Caco-2 (cell line): ENCODE measurements at regions of chr6 and their contacts with region 1.

Region 1: GRCh38 chr6:136643850-136644596 is 93.8 kb upstream of the MAP7 start:
- DNase-seq: peak; percentile 83 to 87
- H3K4me3 ChIP-seq: no peak overlapping the region
- H3K4me3 Mint-ChIP-seq: no peak overlapping the region
- H3K27ac Mint-ChIP-seq: no peak overlapping the region
- H3K4me1 ChIP-seq: peaks cover 5% of the 10 kb centered on the region; the same call in 1 of the 2 replicates
- H3K4me1 Mint-ChIP-seq: no peaks in the 10 kb centered on the region
- H3K27me3 ChIP-seq: no peaks in the 10 kb centered on the region
- H3K27me3 Mint-ChIP-seq: no peaks in the 10 kb centered on the region
- CTCF ChIP-seq: peak; percentile 85 to 93

Region 2: GRCh38 chr6:136822376-136823127 is 178.5 kb after region 1 on chr6 and contains the start of gene PEX7:
- CTCF ChIA-PET with region 1: no interaction called
- POLR2A ChIA-PET with region 1: no interaction called
- intact Hi-C with region 1: loop called (anchors 1 kb)
- DNase-seq: peak; percentile 90
- H3K4me3 ChIP-seq: peak within 1 kb of the TSS; percentile 56
- H3K4me3 Mint-ChIP-seq: peak within 1 kb of the TSS; percentile 98
- H3K27ac Mint-ChIP-seq: peak within 1 kb of the TSS; percentile 97
- H3K4me1 ChIP-seq: peaks cover 8% of the 10 kb centered on the region; the same call in 1 of the 2 replicates
- H3K4me1 Mint-ChIP-seq: peaks cover 7% of the 10 kb centered on the region
- H3K27me3 ChIP-seq: no peaks in the 10 kb centered on the region; the same call in 1 of the 2 replicates
- H3K27me3 Mint-ChIP-seq: peaks cover 4% of the 10 kb centered on the region
- CTCF ChIP-seq: peak; percentile 53 to 65
- total RNA-seq, gene PEX7: 6.1 and 6.4 TPM in 2 replicates